Dorsolateral prefrontal cortex (tissue), 120 donors: ENCODE measurements at regions of chr5 and their contacts with region 1.

Region 1: GRCh38 chr5:64784451-64785025 is 15.8 kb downstream of the CWC27 start:
- DNase-seq: peak; percentile 32 to 85 (median 62)
- H3K4me3 ChIP-seq: no peak overlapping the region
- H3K27ac ChIP-seq: no peak overlapping the region
- H3K27me3 ChIP-seq: no peaks in the 10 kb centered on the region
- CTCF ChIP-seq: peak; percentile 82 to 98 (median 90)

Region 2: GRCh38 chr5:64634997-64635686 is 149.4 kb before region 1 on chr5:
- intact Hi-C with region 1: loop called (anchors 1 to 5 kb)
- DNase-seq: no peak
- H3K4me3 ChIP-seq: no peak overlapping the region
- H3K27ac ChIP-seq: no peak overlapping the region
- H3K27me3 ChIP-seq: peaks cover 0 to 6% (median 0%) of the 10 kb centered on the region in 45 donors
- CTCF ChIP-seq: peak; percentile 68 to 96 (median 85)

Region 3: GRCh38 chr5:64971513-64971912 is 187.0 kb after region 1 on chr5:
- intact Hi-C with region 1: no loop called
- DNase-seq: no peak
- H3K4me3 ChIP-seq: no peak overlapping the region
- H3K27ac ChIP-seq: no peak overlapping the region
- H3K27me3 ChIP-seq: no peaks in the 10 kb centered on the region
- CTCF ChIP-seq: peak in 12 of 56 donors; percentile 7 to 24 (median 12)